Gastrocnemius medialis (tissue), 4 donors: ENCODE measurements at regions of chr7 and their contacts with region 1.

Region 1: GRCh38 chr7:2232766-2233520 is at the start of gene MAD1L1:
- DNase-seq: peak; percentile 69 to 78
- ATAC-seq: peak; percentile 95
- H3K4me3 ChIP-seq: peak within 1 kb of the TSS; percentile 82 to 99 (median 92)
- H3K27ac ChIP-seq: peak within 1 kb of the TSS; percentile 73 to 86 (median 80)
- H3K4me1 ChIP-seq: peaks cover 16 to 22% of the 10 kb centered on the region in 2 donors
- H3K27me3 ChIP-seq: no peaks in the 10 kb centered on the region
- CTCF ChIP-seq: no peak
- POLR2A ChIP-seq: peak in 1 of 2 donors; percentile 12
- total RNA-seq, gene MAD1L1: 19.7 to 32.4 (median 22.7) TPM

Region 2: GRCh38 chr7:2314209-2314955 is 81.4 kb after region 1 on chr7 and contains the start of gene SNX8:
- in situ Hi-C with region 1: no loop called
- intact Hi-C with region 1: loop called (anchors 5 kb)
- DNase-seq: peak; percentile 80
- ATAC-seq: peak; percentile 93 to 96
- H3K4me3 ChIP-seq: peak within 1 kb of the TSS; percentile 75 to 90 (median 78)
- H3K27ac ChIP-seq: peak within 1 kb of the TSS; percentile 63 to 80 (median 74)
- H3K4me1 ChIP-seq: no peaks in the 10 kb centered on the region
- H3K27me3 ChIP-seq: no peaks in the 10 kb centered on the region
- CTCF ChIP-seq: peak in 1 of 5 experiments; percentile 6
- POLR2A ChIP-seq: peak; percentile 44 to 64
- total RNA-seq, gene SNX8: 6.4 to 28.1 (median 24.8) TPM